CD4-positive, alpha-beta T cell (primary cell): ENCODE measurements at regions of chr3 and their contacts with region 1.

Region 1: GRCh38 chr3:146469150-146470017 is at the start of gene PLSCR2:
- DNase-seq: peak; percentile 51 to 87 (median 70)
- ATAC-seq: peak; percentile 95
- H3K4me3 ChIP-seq: peak within 1 kb of the TSS; percentile 76
- H3K4me3 Mint-ChIP-seq: peak within 1 kb of the TSS; percentile 87
- H3K27ac ChIP-seq: peak within 1 kb of the TSS; percentile 19 to 32
- H3K27ac Mint-ChIP-seq: peak within 1 kb of the TSS; percentile 81
- H3K4me1 ChIP-seq: peaks cover 17% of the 10 kb centered on the region
- H3K4me1 Mint-ChIP-seq: peaks cover 13% of the 10 kb centered on the region
- H3K27me3 ChIP-seq: no peaks in the 10 kb centered on the region
- H3K27me3 Mint-ChIP-seq: no peaks in the 10 kb centered on the region
- CTCF ChIP-seq: no peak
- total RNA-seq, gene PLSCR2: not detected

Region 2: GRCh38 chr3:146544002-146544928 is 74.9 kb after region 1 on chr3 and contains the start of gene PLSCR1:
- CTCF ChIA-PET with region 1: no interaction called
- POLR2A ChIA-PET with region 1: interaction called, 28 read pairs
- intact Hi-C with region 1: loop called (anchors 2 to 5 kb)
- DNase-seq: peak; percentile 23 to 87 (median 50)
- ATAC-seq: peak; percentile 75
- H3K4me3 ChIP-seq: peak within 1 kb of the TSS; percentile 83
- H3K4me3 Mint-ChIP-seq: peak within 1 kb of the TSS; percentile 95
- H3K27ac ChIP-seq: peak within 1 kb of the TSS in 1 of 2 donors; percentile 56
- H3K27ac Mint-ChIP-seq: peak within 1 kb of the TSS; percentile 78
- H3K4me1 ChIP-seq: peaks cover 8% of the 10 kb centered on the region
- H3K4me1 Mint-ChIP-seq: peaks cover 65% of the 10 kb centered on the region
- H3K27me3 ChIP-seq: no peaks in the 10 kb centered on the region
- H3K27me3 Mint-ChIP-seq: no peaks in the 10 kb centered on the region
- CTCF ChIP-seq: no peak
- total RNA-seq, gene PLSCR1: 8.2 to 8.3 TPM